Naive thymus-derived CD4-positive, alpha-beta T cell (primary cell): ENCODE measurements at regions of chr11 and their contacts with region 1.

Region 1: DNA sequence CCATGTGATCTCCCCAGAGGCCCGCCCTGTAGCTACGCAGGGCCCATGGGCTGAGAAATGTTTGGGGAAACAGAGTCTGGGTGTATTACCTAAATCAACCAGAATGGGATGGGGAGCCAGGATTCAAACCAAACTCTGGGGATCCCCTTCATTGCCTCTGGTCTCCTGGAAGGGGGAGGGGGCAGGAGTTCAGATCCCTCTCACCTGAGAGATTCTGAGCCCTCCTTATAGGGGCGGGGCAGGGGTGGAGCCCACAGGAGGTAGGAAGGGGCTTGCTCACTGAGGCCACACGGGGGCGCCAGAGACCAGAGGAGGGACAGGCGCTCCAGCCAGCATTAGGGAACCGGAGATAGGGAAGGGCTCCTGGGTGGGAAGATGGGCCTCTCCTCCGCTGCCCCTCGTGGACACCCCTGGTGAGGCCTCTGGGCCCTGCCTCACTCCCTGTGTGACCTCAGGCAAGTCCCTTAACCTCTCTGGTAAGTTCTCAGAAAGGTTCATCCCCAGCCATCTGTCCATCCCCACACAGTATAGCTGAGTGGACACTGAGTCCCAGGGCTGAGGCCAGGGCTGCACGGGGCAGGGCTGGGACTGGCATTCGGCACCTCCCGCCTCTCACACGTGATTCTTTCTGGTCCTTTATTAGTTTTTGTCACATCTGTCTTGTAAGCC is 2.7 kb upstream of the CDC42BPG start:
- DNase-seq: peak; percentile 79 to 96 (median 89)
- ATAC-seq: peak; percentile 78
- H3K4me3 ChIP-seq: no peak overlapping the region
- H3K4me3 Mint-ChIP-seq: peak overlapping the region in 7 of 10 donors; percentile 14 to 55 (median 38)
- H3K27ac ChIP-seq: no peak overlapping the region
- H3K27ac Mint-ChIP-seq: peak overlapping the region; percentile 21 to 83 (median 72)
- H3K4me1 ChIP-seq: peaks cover 41 to 59% of the 10 kb centered on the region in 2 donors
- H3K4me1 Mint-ChIP-seq: peaks cover 40 to 68% (median 58%) of the 10 kb centered on the region in 7 donors
- H3K27me3 ChIP-seq: no peaks in the 10 kb centered on the region
- H3K27me3 Mint-ChIP-seq: no peaks in the 10 kb centered on the region

Region 2: GRCh38 chr11:64742889-64743590 is 104.1 kb before region 1 on chr11:
- CTCF ChIA-PET with region 1: interaction called, 7 read pairs
- POLR2A ChIA-PET with region 1: interaction called, 7 read pairs
- intact Hi-C with region 1: loop called in 1 of 2 experiments (anchors 1 kb)
- DNase-seq: peak; percentile 60 to 91 (median 78)
- ATAC-seq: peak; percentile 45
- H3K4me3 ChIP-seq: peak overlapping the region; percentile 98
- H3K4me3 Mint-ChIP-seq: peak overlapping the region in 9 of 10 donors; percentile 89 to 99 (median 97)
- H3K27ac ChIP-seq: peak overlapping the region; percentile 97
- H3K27ac Mint-ChIP-seq: peak overlapping the region in 5 of 9 donors; percentile 88 to 100 (median 98)
- H3K4me1 ChIP-seq: peaks cover 9 to 16% of the 10 kb centered on the region in 2 donors
- H3K4me1 Mint-ChIP-seq: peaks cover 18 to 47% (median 39%) of the 10 kb centered on the region in 7 donors
- H3K27me3 ChIP-seq: no peaks in the 10 kb centered on the region
- H3K27me3 Mint-ChIP-seq: no peaks in the 10 kb centered on the region

Region 3: DNA sequence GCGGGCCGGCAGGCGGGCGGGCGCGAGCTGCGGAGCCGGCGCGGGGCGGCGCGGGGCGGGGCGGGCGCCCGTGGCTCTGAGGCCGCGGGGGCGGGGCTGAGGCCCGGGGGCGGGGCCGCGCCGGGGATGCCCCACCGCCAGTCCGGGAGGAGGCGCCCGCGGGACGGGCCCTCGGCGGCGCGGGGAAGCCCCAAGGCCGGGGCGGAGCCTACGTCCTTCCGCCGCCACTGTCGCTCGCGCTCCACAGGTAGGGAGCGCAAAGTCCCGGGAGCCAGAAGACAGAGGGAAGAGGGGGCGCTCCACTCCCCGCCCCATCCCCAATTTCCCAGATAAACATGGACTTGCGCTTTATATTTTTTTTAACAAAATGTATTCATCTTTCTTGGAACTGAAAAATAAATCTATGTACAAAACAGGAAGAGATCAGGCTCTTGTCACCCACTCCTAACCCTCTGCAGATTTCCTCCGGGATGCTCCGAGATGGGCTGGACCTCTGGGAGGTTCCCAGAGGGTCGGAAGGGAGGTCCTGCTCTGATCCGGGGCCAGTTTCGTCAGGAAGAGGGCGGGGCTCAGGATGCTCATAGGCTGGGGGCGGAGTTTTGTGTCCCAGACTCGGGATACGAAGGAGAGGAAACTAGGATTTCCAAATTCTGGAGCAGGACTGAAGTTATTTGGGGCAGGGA is 43.8 kb before region 1 on chr11 and contains the start of gene MAP4K2:
- CTCF ChIA-PET with region 1: interaction called, 3 read pairs
- POLR2A ChIA-PET with region 1: interaction called, 7 read pairs
- intact Hi-C with region 1: loop called in 1 of 2 experiments (anchors 1 kb)
- DNase-seq: peak; percentile 80 to 96 (median 87)
- ATAC-seq: peak; percentile 98
- H3K4me3 ChIP-seq: peak within 1 kb of the TSS; percentile 91
- H3K4me3 Mint-ChIP-seq: peak within 1 kb of the TSS; percentile 85 to 92 (median 88)
- H3K27ac ChIP-seq: peak within 1 kb of the TSS; percentile 98
- H3K27ac Mint-ChIP-seq: peak within 1 kb of the TSS; percentile 82 to 97 (median 95)
- H3K4me1 ChIP-seq: peaks cover 9 to 23% of the 10 kb centered on the region in 2 donors
- H3K4me1 Mint-ChIP-seq: peaks cover 27 to 43% (median 32%) of the 10 kb centered on the region in 7 donors
- H3K27me3 ChIP-seq: no peaks in the 10 kb centered on the region
- H3K27me3 Mint-ChIP-seq: no peaks in the 10 kb centered on the region
- total RNA-seq, gene MAP4K2: 75.2 to 130 (median 84.3) TPM

Region 4: GRCh38 chr11:64878494-64879243 is 31.5 kb after region 1 on chr11 and contains the start of gene EHD1:
- CTCF ChIA-PET with region 1: interaction called, 945 read pairs
- POLR2A ChIA-PET with region 1: interaction called, 1,324 read pairs
- intact Hi-C with region 1: loop called (anchors 1 kb)
- DNase-seq: peak; percentile 98 to 99 (median 99)
- ATAC-seq: peak; percentile 91
- H3K4me3 ChIP-seq: peak within 1 kb of the TSS; percentile 100
- H3K4me3 Mint-ChIP-seq: peak within 1 kb of the TSS; percentile 95 to 99 (median 98)
- H3K27ac ChIP-seq: peak within 1 kb of the TSS; percentile 81
- H3K27ac Mint-ChIP-seq: peak within 1 kb of the TSS; percentile 88 to 98 (median 94)
- H3K4me1 ChIP-seq: peaks cover 39 to 45% of the 10 kb centered on the region in 2 donors
- H3K4me1 Mint-ChIP-seq: peaks cover 49 to 65% (median 60%) of the 10 kb centered on the region in 7 donors
- H3K27me3 ChIP-seq: no peaks in the 10 kb centered on the region
- H3K27me3 Mint-ChIP-seq: no peaks in the 10 kb centered on the region
- total RNA-seq, gene EHD1: 124 to 263 (median 208) TPM

Region 5: DNA sequence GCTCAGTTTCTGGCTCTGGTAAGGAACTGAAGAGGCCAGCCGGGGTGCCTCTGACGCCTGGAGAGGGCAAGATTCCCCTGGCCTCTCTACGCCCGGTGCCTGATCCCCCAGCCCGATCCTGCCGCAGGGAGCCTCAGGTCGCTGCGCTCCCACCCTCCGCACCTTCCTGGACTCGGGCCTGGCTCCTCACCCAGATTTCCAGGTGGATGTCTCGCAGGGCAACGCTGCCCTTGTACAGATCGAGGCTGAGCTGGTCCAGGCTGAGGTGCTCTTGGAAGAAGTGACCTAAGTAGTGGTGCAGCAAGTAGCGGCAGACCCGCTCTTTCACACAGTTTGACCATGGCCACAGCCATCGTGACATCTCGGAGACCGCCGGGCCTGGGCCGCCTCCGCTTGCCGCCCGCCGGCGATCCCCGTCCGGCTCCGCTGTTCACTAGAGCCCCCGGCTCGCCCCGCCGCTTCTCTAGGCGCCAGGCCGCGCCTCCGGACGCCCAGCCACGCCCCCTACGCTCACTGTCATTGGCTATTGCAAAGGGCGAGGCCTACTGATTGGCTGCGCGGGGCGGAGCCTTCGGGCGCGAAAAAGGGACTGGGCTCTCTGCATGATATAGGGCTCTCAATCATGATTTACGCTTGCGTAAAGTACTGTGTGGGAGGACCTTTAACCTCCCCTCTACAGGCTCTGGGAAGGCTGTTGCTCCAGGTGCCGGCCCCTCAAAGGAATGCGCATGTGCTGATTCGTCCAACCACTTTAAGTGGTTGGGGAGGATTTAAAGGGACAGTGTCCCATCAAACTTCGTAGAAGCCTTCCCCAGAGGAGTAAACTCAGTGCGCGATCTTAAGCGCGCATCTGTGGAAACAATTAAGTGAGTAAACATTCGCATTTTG is 69.9 kb after region 1 on chr11 and contains the start of gene ATG2A:
- CTCF ChIA-PET with region 1: no interaction called
- POLR2A ChIA-PET with region 1: no interaction called
- intact Hi-C with region 1: loop called in 1 of 2 experiments (anchors 1 kb)
- DNase-seq: peak; percentile 95 to 100 (median 99)
- ATAC-seq: peak; percentile 97
- H3K4me3 ChIP-seq: peak within 1 kb of the TSS; percentile 92
- H3K4me3 Mint-ChIP-seq: peak within 1 kb of the TSS; percentile 88 to 98 (median 91)
- H3K27ac ChIP-seq: peak within 1 kb of the TSS; percentile 83
- H3K27ac Mint-ChIP-seq: peak within 1 kb of the TSS; percentile 81 to 99 (median 91)
- H3K4me1 ChIP-seq: peaks cover 18 to 22% of the 10 kb centered on the region in 2 donors
- H3K4me1 Mint-ChIP-seq: peaks cover 14 to 33% (median 25%) of the 10 kb centered on the region in 7 donors
- H3K27me3 ChIP-seq: no peaks in the 10 kb centered on the region
- H3K27me3 Mint-ChIP-seq: no peaks in the 10 kb centered on the region
- total RNA-seq, gene ATG2A: 30.6 to 105 (median 36.2) TPM

Region 6: GRCh38 chr11:65083834-65084597 is 236.9 kb after region 1 on chr11 and contains the starts of genes CDCA5 and ZFPL1:
- CTCF ChIA-PET with region 1: no interaction called
- POLR2A ChIA-PET with region 1: no interaction called
- intact Hi-C with region 1: loop called in 1 of 2 experiments (anchors 10 kb)
- DNase-seq: peak; percentile 94 to 98 (median 97)
- ATAC-seq: peak; percentile 96
- H3K4me3 ChIP-seq: peak within 1 kb of the TSS; percentile 61
- H3K4me3 Mint-ChIP-seq: peak within 1 kb of the TSS; percentile 88 to 99 (median 93)
- H3K27ac ChIP-seq: peak within 1 kb of the TSS; percentile 86
- H3K27ac Mint-ChIP-seq: peak within 1 kb of the TSS; percentile 94 to 99 (median 97)
- H3K4me1 ChIP-seq: peaks cover 13 to 14% of the 10 kb centered on the region in 2 donors
- H3K4me1 Mint-ChIP-seq: peaks cover 20 to 49% (median 27%) of the 10 kb centered on the region in 7 donors
- H3K27me3 ChIP-seq: no peaks in the 10 kb centered on the region
- H3K27me3 Mint-ChIP-seq: peaks cover 0 to 4% (median 0%) of the 10 kb centered on the region in 5 donors
- total RNA-seq, gene CDCA5: 0.56 to 68.1 (median 0.81) TPM
- total RNA-seq, gene ZFPL1: 29.9 to 53.0 (median 49.3) TPM

Region 7: DNA sequence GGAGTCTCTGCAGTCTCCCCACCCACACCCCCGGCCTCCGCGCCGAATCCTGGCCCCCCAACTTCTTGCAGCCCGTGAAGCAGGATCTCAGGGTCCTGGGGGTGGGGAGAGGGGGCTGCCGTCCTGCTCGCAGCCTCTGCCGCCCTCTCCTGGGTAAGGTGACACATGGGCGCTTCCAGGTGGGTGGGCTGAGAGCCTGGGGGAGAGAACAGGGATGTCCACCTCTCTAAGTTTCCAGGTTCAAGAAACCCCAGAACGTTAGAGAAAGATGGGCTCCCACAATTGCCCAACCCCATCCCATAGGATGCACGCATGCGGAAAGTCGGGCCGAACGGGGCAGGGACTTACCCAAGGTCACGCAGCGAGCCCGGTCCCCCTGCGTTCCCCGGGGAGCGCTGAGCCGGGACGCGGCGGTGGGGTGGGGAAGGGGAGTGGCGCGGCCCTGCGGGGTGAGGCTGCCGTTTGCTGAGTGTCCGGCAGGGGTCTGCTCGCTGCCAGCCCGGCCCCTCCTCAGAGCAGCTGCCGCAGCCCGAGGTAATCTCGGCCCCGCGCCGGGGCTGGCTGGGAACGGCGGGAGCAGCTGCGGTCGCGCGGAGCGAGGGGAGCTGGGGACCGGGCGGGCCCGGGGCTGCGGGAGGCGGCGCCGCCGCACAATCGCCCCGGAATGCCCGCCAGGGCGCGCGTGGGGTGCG is 333.9 kb after region 1 on chr11:
- CTCF ChIA-PET with region 1: no interaction called
- POLR2A ChIA-PET with region 1: interaction called, 3 read pairs
- intact Hi-C with region 1: loop called in 1 of 2 experiments (anchors 2 kb)
- DNase-seq: peak in 8 of 9 donors; percentile 41 to 71 (median 45)
- ATAC-seq: peak; percentile 85
- H3K4me3 ChIP-seq: peak overlapping the region; percentile 67
- H3K4me3 Mint-ChIP-seq: peak overlapping the region; percentile 80 to 94 (median 90)
- H3K27ac ChIP-seq: peak overlapping the region; percentile 93
- H3K27ac Mint-ChIP-seq: peak overlapping the region; percentile 36 to 91 (median 84)
- H3K4me1 ChIP-seq: peaks cover 6 to 8% of the 10 kb centered on the region in 2 donors
- H3K4me1 Mint-ChIP-seq: peaks cover 7 to 30% (median 22%) of the 10 kb centered on the region in 7 donors
- H3K27me3 ChIP-seq: no peaks in the 10 kb centered on the region
- H3K27me3 Mint-ChIP-seq: peaks cover 0 to 22% (median 0%) of the 10 kb centered on the region in 5 donors

Region 8: DNA sequence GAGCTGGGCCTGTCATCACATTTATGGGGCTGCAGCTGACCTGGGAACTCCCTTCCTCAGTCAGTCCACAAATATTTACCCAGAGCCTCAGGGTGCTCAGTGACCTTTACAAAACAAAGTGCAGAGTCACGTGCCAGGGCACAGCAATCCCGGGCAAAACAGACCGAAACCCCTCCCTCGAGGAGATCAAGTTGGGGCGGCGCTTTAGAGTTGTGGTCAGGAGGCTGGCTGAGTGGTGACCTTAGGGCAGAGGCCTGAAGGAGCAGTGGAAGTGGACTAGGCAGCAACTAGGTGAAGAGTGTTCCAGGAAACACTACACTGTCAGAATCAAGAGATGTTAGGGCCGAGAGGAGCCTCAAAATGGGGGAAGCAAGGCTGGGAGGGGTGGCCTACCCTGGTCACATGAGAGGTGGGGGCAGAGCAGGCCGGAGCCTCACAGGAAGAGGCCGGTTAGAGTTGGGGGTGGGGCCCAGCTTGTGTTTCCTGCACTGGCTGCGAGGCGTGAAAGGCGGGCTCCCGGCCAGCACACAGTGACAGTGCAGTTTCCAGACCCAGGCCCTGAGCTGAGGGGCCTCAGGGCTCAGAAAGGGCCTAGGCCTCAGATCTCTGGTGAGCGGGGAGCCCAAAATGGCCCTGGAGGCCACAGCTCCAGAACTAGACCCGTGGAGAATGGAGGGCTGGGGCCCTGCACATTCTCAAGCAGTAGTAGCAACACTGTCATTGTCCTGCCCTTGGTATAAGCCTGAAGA is 571.8 kb after region 1 on chr11:
- CTCF ChIA-PET with region 1: no interaction called
- POLR2A ChIA-PET with region 1: no interaction called
- intact Hi-C with region 1: no loop called
- DNase-seq: peak; percentile 33 to 89 (median 48)
- ATAC-seq: peak; percentile 51
- H3K4me3 ChIP-seq: peak overlapping the region; percentile 82
- H3K4me3 Mint-ChIP-seq: peak overlapping the region; percentile 92 to 100 (median 97)
- H3K27ac ChIP-seq: peak overlapping the region; percentile 98
- H3K27ac Mint-ChIP-seq: peak overlapping the region; percentile 97 to 100 (median 99)
- H3K4me1 ChIP-seq: peaks cover 36 to 46% of the 10 kb centered on the region in 2 donors
- H3K4me1 Mint-ChIP-seq: peaks cover 36 to 65% (median 45%) of the 10 kb centered on the region in 7 donors
- H3K27me3 ChIP-seq: no peaks in the 10 kb centered on the region
- H3K27me3 Mint-ChIP-seq: peaks cover 0 to 15% (median 0%) of the 10 kb centered on the region in 5 donors